ENCODE measurements at regions of chr9 and their contacts with region 1.

Region 1: DNA sequence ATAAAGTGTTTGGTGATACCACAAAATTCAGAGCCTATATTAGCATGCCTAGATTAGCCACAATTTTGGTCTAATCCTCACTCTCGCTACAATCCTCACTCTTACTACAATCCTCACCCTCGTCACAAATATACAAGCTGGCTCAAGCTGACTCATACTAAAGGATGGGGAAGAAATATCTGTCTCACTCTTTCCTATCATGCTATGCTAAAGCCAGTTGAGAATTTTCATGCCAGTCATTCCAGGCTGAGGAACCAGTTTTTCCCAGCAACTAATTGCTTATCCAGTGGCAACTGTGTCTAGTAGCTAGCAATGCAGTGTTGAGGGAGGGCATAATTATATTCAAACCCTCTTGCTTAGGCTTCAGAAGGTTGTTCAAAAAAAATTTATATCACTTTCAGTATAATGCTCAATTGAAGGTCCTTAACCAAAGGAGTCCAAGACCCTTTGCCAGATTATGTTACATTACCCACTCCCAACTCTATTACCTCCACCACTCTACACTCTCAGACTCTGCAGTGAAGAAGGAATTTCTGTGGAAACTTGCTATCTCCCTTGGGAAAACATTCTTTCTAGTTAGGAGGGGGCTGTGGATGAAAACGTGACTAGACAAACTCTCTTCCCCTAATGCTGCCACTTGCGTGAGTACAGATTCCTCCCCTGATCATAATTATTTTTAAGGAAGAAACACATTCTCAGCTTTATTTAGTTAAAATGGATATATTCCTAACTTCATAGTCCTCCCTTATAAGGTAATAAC is 810.3 kb upstream of the ACO1 start:
- DNase-seq: peak; percentile 77
- H3K4me3 ChIP-seq: no peak overlapping the region
- H3K27ac ChIP-seq: peak overlapping the region; percentile 73
- H3K4me1 ChIP-seq: peaks cover 22% of the 10 kb centered on the region
- H3K27me3 ChIP-seq: no peaks in the 10 kb centered on the region
- CTCF ChIP-seq: no peak

Region 2: GRCh38 chr9:31597977-31598376 is 23.8 kb after region 1 on chr9:
- CTCF ChIA-PET with region 1: no interaction called
- dilution Hi-C with region 1: no loop called
- in situ Hi-C with region 1: no loop called
- intact Hi-C with region 1: no loop called
- DNase-seq: peak; percentile 90
- H3K4me3 ChIP-seq: peak overlapping the region in 1 of 3 experiments; percentile 13
- H3K27ac ChIP-seq: peak overlapping the region; percentile 55
- H3K4me1 ChIP-seq: peaks cover 16% of the 10 kb centered on the region
- H3K27me3 ChIP-seq: no peaks in the 10 kb centered on the region
- CTCF ChIP-seq: no peak

Region 3: DNA sequence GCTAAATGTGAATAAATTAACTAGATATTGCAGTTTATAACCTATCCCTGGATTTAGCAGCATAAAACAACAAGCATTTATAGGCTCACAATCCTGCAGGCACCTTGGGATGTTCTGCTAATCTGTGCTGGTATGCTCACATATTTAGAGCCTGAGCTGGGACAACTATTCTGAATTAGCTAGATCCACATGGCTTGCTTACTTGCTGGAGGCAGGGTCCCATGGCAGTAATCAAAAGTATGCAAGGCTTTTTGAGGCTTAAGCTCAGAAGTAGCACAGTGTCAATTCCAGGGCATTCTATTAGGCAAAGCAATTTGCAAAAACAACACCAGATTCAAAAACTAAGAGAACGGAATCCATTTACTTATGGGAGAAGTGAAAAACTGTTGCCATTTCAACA is 65.3 kb after region 1 on chr9:
- CTCF ChIA-PET with region 1: no interaction called
- dilution Hi-C with region 1: no loop called
- in situ Hi-C with region 1: no loop called
- intact Hi-C with region 1: no loop called
- DNase-seq: no peak
- H3K4me3 ChIP-seq: no peak overlapping the region
- H3K27ac ChIP-seq: no peak overlapping the region
- H3K4me1 ChIP-seq: no peaks in the 10 kb centered on the region
- H3K27me3 ChIP-seq: no peaks in the 10 kb centered on the region
- CTCF ChIP-seq: no peak

Region 4: DNA sequence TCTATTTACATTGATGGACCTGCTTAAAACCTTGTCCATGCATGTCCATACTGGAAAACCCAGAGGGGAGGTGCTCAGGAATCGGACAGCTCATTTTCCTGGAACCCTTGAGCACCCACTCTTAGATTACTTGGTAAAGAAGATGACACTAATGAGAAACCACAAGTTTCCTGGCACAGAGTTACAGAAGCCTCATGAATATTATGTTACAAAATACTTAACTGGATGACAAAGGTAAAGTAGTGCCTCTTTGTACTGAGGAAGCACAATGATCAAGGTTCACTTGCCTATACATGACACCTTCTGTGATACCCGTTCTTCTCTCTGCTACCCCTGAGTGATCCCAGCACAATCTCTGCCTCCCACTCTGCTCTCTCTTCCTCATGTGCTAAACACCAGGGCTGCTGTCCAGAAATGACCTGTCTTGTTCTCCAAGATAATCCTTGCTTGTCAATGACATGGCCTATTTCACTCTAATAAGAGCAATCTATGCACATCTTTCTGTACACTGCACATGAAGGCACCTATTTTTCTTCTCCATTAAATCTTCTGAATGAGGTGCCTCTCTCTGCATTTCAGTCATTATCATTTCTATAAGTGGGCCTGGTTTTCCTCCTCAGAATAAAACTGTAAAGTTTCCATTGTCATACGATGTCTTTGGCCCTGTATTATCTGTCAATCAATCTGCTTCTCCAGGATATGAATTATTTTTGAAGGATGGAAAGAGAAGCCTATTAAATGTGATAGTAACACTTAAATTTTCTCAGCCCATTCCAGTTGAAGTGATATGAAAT is 126.3 kb after region 1 on chr9:
- CTCF ChIA-PET with region 1: no interaction called
- dilution Hi-C with region 1: no loop called
- in situ Hi-C with region 1: no loop called
- intact Hi-C with region 1: loop called (anchors 1 kb)
- DNase-seq: peak; percentile 95
- H3K4me3 ChIP-seq: no peak overlapping the region
- H3K27ac ChIP-seq: peak overlapping the region; percentile 40
- H3K4me1 ChIP-seq: peaks cover 22% of the 10 kb centered on the region
- H3K27me3 ChIP-seq: no peaks in the 10 kb centered on the region
- CTCF ChIP-seq: no peak